HCT116 (cell line): ENCODE measurements at regions of chr18 and their contacts with region 1.

Region 1: GRCh38 chr18:62186774-62187542 is at the starts of genes PIGN and RELCH:
- DNase-seq: peak; percentile 97
- ATAC-seq: peak; percentile 91
- H3K4me3 ChIP-seq: peak within 1 kb of the TSS; percentile 89 to 96
- H3K27ac ChIP-seq: peak within 1 kb of the TSS; percentile 74
- H3K4me1 ChIP-seq: peaks cover 7 to 14% of the 10 kb centered on the region in 2 experiments; a peak in 3 of 4 replicates
- H3K27me3 ChIP-seq: no peaks in the 10 kb centered on the region
- CTCF ChIP-seq: no peak
- POLR2A ChIP-seq: peak; percentile 60
- RAD21 ChIP-seq: no peak
- total RNA-seq, gene PIGN: 12.2 TPM
- total RNA-seq, gene RELCH: 17.4 TPM

Region 2: GRCh38 chr18:62091487-62092120 is 95.4 kb before region 1 on chr18:
- CTCF ChIA-PET with region 1: no interaction called
- POLR2A ChIA-PET with region 1: no interaction called
- RAD21 ChIA-PET with region 1: no interaction called
- intact Hi-C with region 1: no loop called
- DNase-seq: no peak
- ATAC-seq: no peak
- H3K4me3 ChIP-seq: no peak overlapping the region
- H3K27ac ChIP-seq: no peak overlapping the region
- H3K4me1 ChIP-seq: no peaks in the 10 kb centered on the region
- H3K27me3 ChIP-seq: no peaks in the 10 kb centered on the region
- CTCF ChIP-seq: no peak
- POLR2A ChIP-seq: no peak
- RAD21 ChIP-seq: no peak

Region 3: GRCh38 chr18:62249478-62250097 is 62.6 kb after region 1 on chr18:
- CTCF ChIA-PET with region 1: interaction called, 9 read pairs
- POLR2A ChIA-PET with region 1: no interaction called
- RAD21 ChIA-PET with region 1: interaction called in 1 of 2 experiments, 3 read pairs
- intact Hi-C with region 1: loop called (anchors 1 kb)
- DNase-seq: peak; percentile 69
- ATAC-seq: peak; percentile 72
- H3K4me3 ChIP-seq: no peak overlapping the region
- H3K27ac ChIP-seq: no peak overlapping the region
- H3K4me1 ChIP-seq: no peaks in the 10 kb centered on the region
- H3K27me3 ChIP-seq: no peaks in the 10 kb centered on the region
- CTCF ChIP-seq: peak; percentile 53 to 82 (median 58); a peak in 5 of 6 replicates
- POLR2A ChIP-seq: no peak
- RAD21 ChIP-seq: peak; percentile 63

Region 4: GRCh38 chr18:62584241-62585120 is 397.5 kb after region 1 on chr18:
- CTCF ChIA-PET with region 1: interaction called, 3 read pairs
- POLR2A ChIA-PET with region 1: no interaction called
- RAD21 ChIA-PET with region 1: no interaction called
- intact Hi-C with region 1: loop called (anchors 1 kb)
- DNase-seq: peak; percentile 76
- ATAC-seq: peak; percentile 90
- H3K4me3 ChIP-seq: no peak overlapping the region
- H3K27ac ChIP-seq: no peak overlapping the region
- H3K4me1 ChIP-seq: peaks cover 0 to 8% of the 10 kb centered on the region in 2 experiments; a peak in 2 of 4 replicates
- H3K27me3 ChIP-seq: no peaks in the 10 kb centered on the region
- CTCF ChIP-seq: peak; percentile 96 to 99 (median 98)
- POLR2A ChIP-seq: no peak
- RAD21 ChIP-seq: peak; percentile 92

Region 5: GRCh38 chr18:62982600-62983251 is 795.8 kb after region 1 on chr18:
- CTCF ChIA-PET with region 1: no interaction called
- POLR2A ChIA-PET with region 1: no interaction called
- RAD21 ChIA-PET with region 1: no interaction called
- intact Hi-C with region 1: loop called (anchors 2 kb)
- DNase-seq: peak; percentile 32
- ATAC-seq: peak; percentile 78
- H3K4me3 ChIP-seq: no peak overlapping the region
- H3K27ac ChIP-seq: no peak overlapping the region
- H3K4me1 ChIP-seq: no peaks in the 10 kb centered on the region
- H3K27me3 ChIP-seq: no peaks in the 10 kb centered on the region
- CTCF ChIP-seq: peak; percentile 77 to 87 (median 79)
- POLR2A ChIP-seq: no peak
- RAD21 ChIP-seq: peak; percentile 90

Region 6: DNA sequence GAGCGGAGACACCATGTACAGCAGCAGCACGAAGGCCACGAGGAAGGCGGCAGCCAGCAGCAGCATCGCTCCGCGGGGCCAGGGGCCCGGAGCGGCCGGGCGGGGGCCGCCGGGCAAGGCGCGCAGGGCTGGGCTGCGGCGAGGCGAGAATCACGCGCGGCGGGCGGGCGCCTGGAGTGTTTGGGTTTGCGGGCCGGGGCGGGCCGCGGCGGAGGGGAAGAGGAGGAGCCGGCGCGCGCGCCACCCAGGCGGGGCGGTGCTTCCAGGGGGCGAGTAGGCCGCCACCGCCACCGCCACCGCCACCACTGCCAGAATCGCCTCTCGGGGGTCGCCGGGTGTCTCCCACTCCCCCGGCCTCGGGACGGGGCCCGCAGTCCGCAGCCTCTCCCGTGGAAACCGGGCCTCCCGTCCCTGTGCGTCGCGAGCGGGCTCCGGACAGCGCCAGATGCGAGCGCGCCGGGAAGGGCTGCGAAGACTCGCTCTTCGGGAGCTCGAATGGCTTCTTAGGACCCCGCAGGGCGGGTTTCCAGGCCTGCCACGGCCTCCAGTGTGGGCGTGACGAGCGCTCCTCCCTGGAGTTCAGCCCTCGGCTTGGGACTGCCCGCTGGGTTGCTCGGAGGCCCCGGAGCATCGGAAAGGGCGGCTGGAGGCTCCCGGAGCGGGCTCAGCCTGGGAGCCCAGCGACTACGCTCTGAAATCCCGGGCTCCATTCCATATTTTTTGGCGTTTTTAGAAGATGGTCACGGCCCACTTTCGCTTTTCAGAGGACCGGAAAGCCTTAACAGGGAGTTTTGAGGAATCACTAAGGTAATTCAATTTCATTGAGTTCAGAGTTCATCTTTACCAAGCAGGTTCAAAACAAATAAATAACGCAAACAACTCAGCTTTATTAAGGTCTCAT is 1180.3 kb after region 1 on chr18 and contains the start of gene KDSR:
- CTCF ChIA-PET with region 1: no interaction called
- POLR2A ChIA-PET with region 1: no interaction called
- RAD21 ChIA-PET with region 1: no interaction called
- intact Hi-C with region 1: loop called (anchors 10 kb)
- DNase-seq: peak; percentile 94
- ATAC-seq: peak; percentile 88
- H3K4me3 ChIP-seq: peak within 1 kb of the TSS; percentile 84 to 85
- H3K27ac ChIP-seq: peak within 1 kb of the TSS; percentile 87
- H3K4me1 ChIP-seq: peaks cover 7 to 14% of the 10 kb centered on the region in 2 experiments; a peak in 3 of 4 replicates
- H3K27me3 ChIP-seq: no peaks in the 10 kb centered on the region
- CTCF ChIP-seq: no peak
- POLR2A ChIP-seq: peak; percentile 89
- RAD21 ChIP-seq: no peak
- total RNA-seq, gene KDSR: 68.6 TPM